ENCODE measurements at regions of chr7 and their contacts with region 1.

Region 1: GRCh38 chr7:48540746-48541145 is 369.5 kb downstream of the ABCA13 start:
- DNase-seq: no peak
- H3K4me3 ChIP-seq: no peak overlapping the region
- H3K4me3 Mint-ChIP-seq: no peak overlapping the region
- H3K27ac ChIP-seq: no peak overlapping the region
- H3K27ac Mint-ChIP-seq: no peak overlapping the region
- H3K4me1 ChIP-seq: no peaks in the 10 kb centered on the region
- H3K4me1 Mint-ChIP-seq: peaks cover 3% of the 10 kb centered on the region
- H3K27me3 ChIP-seq: no peaks in the 10 kb centered on the region
- H3K27me3 Mint-ChIP-seq: no peaks in the 10 kb centered on the region
- CTCF ChIP-seq: no peak

Region 2: GRCh38 chr7:48551652-48552051 is 10.9 kb after region 1 on chr7:
- intact Hi-C with region 1: loop called in 1 of 2 experiments (anchors 1 kb)
- DNase-seq: no peak
- H3K4me3 ChIP-seq: no peak overlapping the region
- H3K4me3 Mint-ChIP-seq: no peak overlapping the region
- H3K27ac ChIP-seq: no peak overlapping the region
- H3K27ac Mint-ChIP-seq: no peak overlapping the region
- H3K4me1 ChIP-seq: no peaks in the 10 kb centered on the region
- H3K4me1 Mint-ChIP-seq: no peaks in the 10 kb centered on the region
- H3K27me3 ChIP-seq: no peaks in the 10 kb centered on the region
- H3K27me3 Mint-ChIP-seq: no peaks in the 10 kb centered on the region
- CTCF ChIP-seq: no peak

Region 3: GRCh38 chr7:48894574-48894973 is 353.8 kb after region 1 on chr7:
- intact Hi-C with region 1: no loop called
- DNase-seq: no peak
- H3K4me3 ChIP-seq: no peak overlapping the region
- H3K4me3 Mint-ChIP-seq: no peak overlapping the region
- H3K27ac ChIP-seq: no peak overlapping the region
- H3K27ac Mint-ChIP-seq: no peak overlapping the region
- H3K4me1 ChIP-seq: no peaks in the 10 kb centered on the region
- H3K4me1 Mint-ChIP-seq: no peaks in the 10 kb centered on the region
- H3K27me3 ChIP-seq: no peaks in the 10 kb centered on the region
- H3K27me3 Mint-ChIP-seq: peaks cover 0 to 2% (median 0%) of the 10 kb centered on the region in 3 donors
- CTCF ChIP-seq: no peak